Endothelial cell of umbilical vein (primary cell): ENCODE measurements at regions of chr1 and their contacts with region 1.

Region 1: GRCh38 chr1:202274611-202275010 is 67.1 kb downstream of the UBE2T start:
- DNase-seq: peak; percentile 48
- H3K4me3 ChIP-seq: no peak overlapping the region
- H3K27ac ChIP-seq: no peak overlapping the region
- H3K4me1 ChIP-seq: peaks cover 9% of the 10 kb centered on the region
- H3K27me3 ChIP-seq: peaks cover 4% of the 10 kb centered on the region in 2 experiments
- CTCF ChIP-seq: peak; percentile 69 to 74
- POLR2A ChIP-seq: no peak

Region 2: DNA sequence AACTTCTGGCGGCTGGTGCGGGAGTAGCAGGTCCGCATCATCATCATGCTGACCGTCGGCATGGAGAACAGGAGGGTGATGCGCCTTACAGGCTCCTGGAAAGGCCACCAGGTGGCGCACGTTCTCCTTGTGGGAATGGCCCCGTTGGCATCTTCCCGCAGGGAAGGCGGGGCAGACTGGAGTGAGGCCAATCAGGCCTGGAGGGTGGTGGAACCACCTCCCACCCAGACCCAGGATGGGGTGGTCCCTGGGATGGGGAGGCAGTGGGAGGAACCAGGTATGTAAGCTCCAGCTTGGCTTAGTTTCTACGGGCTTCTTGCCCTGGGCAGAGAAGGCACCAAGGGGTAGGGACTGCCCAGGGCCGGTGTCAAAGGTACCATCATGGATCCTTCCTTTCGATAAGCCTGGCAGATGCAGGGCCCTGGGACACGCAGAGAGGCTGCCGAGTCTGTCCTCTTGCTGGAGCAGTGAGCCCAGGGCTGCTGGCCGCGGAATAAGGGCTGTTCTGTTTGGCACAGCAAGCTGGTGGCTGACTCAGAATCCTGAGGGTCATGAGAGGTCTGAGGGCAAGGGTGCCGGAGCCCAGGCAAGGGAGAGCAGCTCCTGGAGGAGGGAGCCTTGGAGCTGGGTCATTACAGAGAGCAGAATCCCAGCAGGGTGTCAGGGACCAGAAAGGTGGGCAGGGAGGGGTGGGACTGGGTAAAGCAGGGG is 89.7 kb before region 1 on chr1:
- CTCF ChIA-PET with region 1: interaction called, 12 read pairs
- POLR2A ChIA-PET with region 1: no interaction called
- dilution Hi-C with region 1: no loop called
- intact Hi-C with region 1: no loop called
- DNase-seq: peak; percentile 83
- H3K4me3 ChIP-seq: no peak overlapping the region
- H3K27ac ChIP-seq: no peak overlapping the region
- H3K4me1 ChIP-seq: no peaks in the 10 kb centered on the region
- H3K27me3 ChIP-seq: peaks cover 8 to 13% of the 10 kb centered on the region in 2 experiments
- CTCF ChIP-seq: peak; percentile 90 to 92
- POLR2A ChIP-seq: no peak

Region 3: DNA sequence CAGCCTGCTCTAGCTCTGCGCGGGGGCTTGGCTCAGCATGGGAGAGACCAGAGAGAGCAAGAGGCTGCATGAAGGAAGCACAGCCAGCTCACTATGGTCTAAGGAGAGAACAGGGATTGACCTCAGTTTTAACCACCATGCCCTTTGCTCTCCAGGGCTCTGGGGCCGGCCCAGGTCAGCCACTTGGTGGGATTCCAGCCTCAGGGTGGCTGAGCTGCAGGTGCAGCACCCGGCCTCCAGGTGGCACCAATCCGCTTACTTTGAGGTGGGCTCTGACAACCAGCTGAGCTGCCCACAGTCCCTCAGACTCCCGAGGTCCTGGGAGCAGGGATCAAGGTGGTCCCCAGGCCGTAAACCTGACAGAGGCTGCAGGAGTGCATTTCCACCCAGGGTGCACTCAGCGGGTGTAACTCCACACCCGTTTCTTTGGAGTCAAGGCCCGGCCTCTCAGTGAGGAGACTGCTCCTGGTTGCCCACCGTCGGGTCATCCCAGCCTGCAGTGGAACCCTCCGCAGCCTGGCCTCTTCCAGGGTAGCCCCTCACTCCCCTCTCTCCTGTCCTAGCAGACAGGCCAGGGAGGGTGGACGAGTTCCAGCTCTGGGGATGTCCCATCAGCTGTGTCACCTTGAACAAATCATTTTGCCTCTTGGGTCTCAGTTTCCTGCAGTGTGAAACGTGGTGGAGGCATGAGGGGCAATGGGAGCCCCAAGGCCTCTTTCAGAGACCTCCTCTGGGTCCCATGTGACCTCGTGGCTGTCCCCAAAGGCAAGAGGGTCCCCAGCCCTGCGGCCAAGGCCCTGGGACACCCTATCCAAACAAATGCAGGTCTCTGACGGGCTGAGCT is 81.6 kb before region 1 on chr1:
- CTCF ChIA-PET with region 1: interaction called, 12 read pairs
- POLR2A ChIA-PET with region 1: no interaction called
- dilution Hi-C with region 1: no loop called
- intact Hi-C with region 1: loop called (anchors 1 kb)
- DNase-seq: peak; percentile 49
- H3K4me3 ChIP-seq: no peak overlapping the region
- H3K27ac ChIP-seq: no peak overlapping the region
- H3K4me1 ChIP-seq: no peaks in the 10 kb centered on the region
- H3K27me3 ChIP-seq: peaks cover 32 to 33% of the 10 kb centered on the region in 2 experiments
- CTCF ChIP-seq: peak; percentile 87 to 93
- POLR2A ChIP-seq: no peak

Region 4: DNA sequence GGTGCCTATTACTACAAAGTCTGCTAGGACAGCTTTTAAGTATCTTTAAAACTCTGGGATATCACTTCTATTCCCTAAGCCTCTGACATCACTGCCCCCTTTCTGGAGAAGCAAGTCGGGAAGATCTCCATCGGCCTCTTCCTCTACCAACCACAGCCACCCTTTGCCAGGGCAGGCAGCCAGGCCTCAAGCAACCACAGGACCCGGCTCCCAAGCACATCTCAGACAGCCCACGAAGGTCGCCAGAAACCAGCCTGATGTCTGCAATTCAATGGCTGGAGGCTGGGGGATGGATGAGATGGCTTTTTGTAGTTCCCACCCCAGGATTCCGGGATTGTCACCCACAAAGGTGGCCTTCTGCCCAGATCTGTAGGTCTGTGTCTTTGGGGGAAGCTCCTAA is 10.3 kb before region 1 on chr1:
- CTCF ChIA-PET with region 1: interaction called, 11 read pairs
- POLR2A ChIA-PET with region 1: no interaction called
- dilution Hi-C with region 1: no loop called
- intact Hi-C with region 1: no loop called
- DNase-seq: no peak
- H3K4me3 ChIP-seq: no peak overlapping the region
- H3K27ac ChIP-seq: no peak overlapping the region
- H3K4me1 ChIP-seq: no peaks in the 10 kb centered on the region
- H3K27me3 ChIP-seq: peaks cover 41 to 53% of the 10 kb centered on the region in 2 experiments
- CTCF ChIP-seq: no peak
- POLR2A ChIP-seq: no peak

Region 5: GRCh38 chr1:202286622-202287097 is 12.0 kb after region 1 on chr1:
- CTCF ChIA-PET with region 1: interaction called, 11 read pairs
- POLR2A ChIA-PET with region 1: interaction called, 4 read pairs
- dilution Hi-C with region 1: no loop called
- intact Hi-C with region 1: no loop called
- DNase-seq: peak; percentile 60
- H3K4me3 ChIP-seq: no peak overlapping the region
- H3K27ac ChIP-seq: peak overlapping the region; percentile 2
- H3K4me1 ChIP-seq: peaks cover 53% of the 10 kb centered on the region
- H3K27me3 ChIP-seq: no peaks in the 10 kb centered on the region
- CTCF ChIP-seq: no peak
- POLR2A ChIP-seq: no peak

Region 6: GRCh38 chr1:202306535-202307345 is 32.1 kb after region 1 on chr1:
- CTCF ChIA-PET with region 1: interaction called, 117 read pairs
- POLR2A ChIA-PET with region 1: no interaction called
- dilution Hi-C with region 1: no loop called
- intact Hi-C with region 1: no loop called
- DNase-seq: no peak
- H3K4me3 ChIP-seq: no peak overlapping the region
- H3K27ac ChIP-seq: no peak overlapping the region
- H3K4me1 ChIP-seq: peaks cover 2% of the 10 kb centered on the region
- H3K27me3 ChIP-seq: no peaks in the 10 kb centered on the region
- CTCF ChIP-seq: no peak
- POLR2A ChIP-seq: no peak

Region 7: GRCh38 chr1:203046984-203047630 is 772.5 kb after region 1 on chr1:
- CTCF ChIA-PET with region 1: no interaction called
- POLR2A ChIA-PET with region 1: no interaction called
- dilution Hi-C with region 1: no loop called
- intact Hi-C with region 1: no loop called
- DNase-seq: peak; percentile 44
- H3K4me3 ChIP-seq: no peak overlapping the region
- H3K27ac ChIP-seq: no peak overlapping the region
- H3K4me1 ChIP-seq: no peaks in the 10 kb centered on the region
- H3K27me3 ChIP-seq: peaks cover 0 to 2% of the 10 kb centered on the region in 2 experiments
- CTCF ChIP-seq: no peak
- POLR2A ChIP-seq: no peak